Calu3 (cell line): ENCODE measurements at regions of chr17 and their contacts with region 1.

Region 1: DNA sequence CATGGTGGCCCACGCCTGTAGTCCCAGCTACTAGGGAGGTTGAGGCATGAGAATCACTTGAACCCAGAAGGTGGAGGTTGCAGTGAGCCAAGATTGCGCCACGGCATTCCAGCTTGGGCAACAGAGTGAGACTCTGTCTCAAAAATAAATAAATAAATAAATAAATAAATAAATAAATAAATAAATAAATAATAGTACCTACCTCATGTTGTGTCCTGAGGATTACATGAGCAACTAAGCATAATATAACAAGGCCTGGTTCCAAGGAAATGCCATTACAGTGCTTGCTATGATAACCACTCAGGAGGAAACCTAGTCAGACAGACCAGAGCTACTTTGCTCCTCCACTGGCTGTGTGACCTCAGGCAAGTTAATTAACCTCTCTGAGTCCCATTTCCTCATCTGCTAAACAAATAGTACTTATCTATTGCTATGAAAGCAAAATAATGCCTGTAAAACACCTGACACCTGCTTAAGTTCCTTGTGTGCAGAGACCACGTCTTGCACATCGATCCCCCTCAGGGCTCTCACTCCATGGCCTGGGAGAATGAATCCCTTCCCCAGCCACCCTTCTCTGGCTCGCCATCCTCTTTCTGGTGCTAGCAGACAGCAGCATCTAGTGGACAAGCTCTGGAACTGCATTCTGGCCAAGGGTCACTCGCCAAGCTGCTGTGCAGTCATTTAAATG is 7.5 kb downstream of the EPOP start:
- DNase-seq: peak; percentile 96
- H3K4me3 Mint-ChIP-seq: no peak overlapping the region
- H3K27ac Mint-ChIP-seq: no peak overlapping the region
- H3K4me1 Mint-ChIP-seq: peaks cover 15% of the 10 kb centered on the region
- H3K27me3 Mint-ChIP-seq: peaks cover 69% of the 10 kb centered on the region
- CTCF ChIP-seq: peak; percentile 100

Region 2: GRCh38 chr17:38444151-38444550 is 223.1 kb before region 1 on chr17:
- CTCF ChIA-PET with region 1: interaction called, 3 read pairs
- intact Hi-C with region 1: loop called (anchors 5 kb)
- DNase-seq: peak; percentile 96
- H3K4me3 Mint-ChIP-seq: peak overlapping the region; percentile 1
- H3K27ac Mint-ChIP-seq: no peak overlapping the region
- H3K4me1 Mint-ChIP-seq: peaks cover 36% of the 10 kb centered on the region
- H3K27me3 Mint-ChIP-seq: peaks cover 30% of the 10 kb centered on the region
- CTCF ChIP-seq: peak; percentile 100

Region 3: GRCh38 chr17:38572669-38573365 is 94.4 kb before region 1 on chr17:
- CTCF ChIA-PET with region 1: interaction called, 12 read pairs
- intact Hi-C with region 1: no loop called
- DNase-seq: peak; percentile 75
- H3K4me3 Mint-ChIP-seq: peak overlapping the region; percentile 24
- H3K27ac Mint-ChIP-seq: no peak overlapping the region
- H3K4me1 Mint-ChIP-seq: peaks cover 10% of the 10 kb centered on the region
- H3K27me3 Mint-ChIP-seq: peaks cover 100% of the 10 kb centered on the region
- CTCF ChIP-seq: no peak

Region 4: DNA sequence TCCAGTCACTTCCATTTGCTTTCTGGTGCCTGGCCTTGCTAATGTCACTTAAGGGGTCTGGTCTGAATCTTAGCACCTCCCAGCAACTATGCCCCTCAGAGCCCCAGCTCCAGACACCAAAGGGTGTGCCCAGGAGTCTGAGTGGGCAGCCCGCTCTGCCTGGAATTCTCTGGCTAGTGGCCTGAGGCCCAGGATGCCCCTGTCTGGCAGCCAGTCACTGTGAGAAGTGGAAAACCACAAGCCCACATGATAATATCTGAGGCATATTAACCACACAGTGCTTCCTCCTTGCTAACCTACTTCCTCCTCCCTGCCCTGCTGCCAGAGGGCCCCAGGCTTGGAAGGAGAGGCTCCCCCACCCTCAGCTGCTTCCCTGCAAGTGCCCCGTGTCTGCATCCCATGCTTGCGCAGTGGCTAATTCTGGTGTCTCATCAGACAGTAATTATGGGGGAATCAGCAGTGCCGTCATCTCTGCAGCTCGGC is 75.4 kb before region 1 on chr17:
- CTCF ChIA-PET with region 1: interaction called, 17 read pairs
- intact Hi-C with region 1: no loop called
- DNase-seq: peak; percentile 71
- H3K4me3 Mint-ChIP-seq: no peak overlapping the region
- H3K27ac Mint-ChIP-seq: no peak overlapping the region
- H3K4me1 Mint-ChIP-seq: peaks cover 24% of the 10 kb centered on the region
- H3K27me3 Mint-ChIP-seq: peaks cover 80% of the 10 kb centered on the region
- CTCF ChIP-seq: no peak

Region 5: DNA sequence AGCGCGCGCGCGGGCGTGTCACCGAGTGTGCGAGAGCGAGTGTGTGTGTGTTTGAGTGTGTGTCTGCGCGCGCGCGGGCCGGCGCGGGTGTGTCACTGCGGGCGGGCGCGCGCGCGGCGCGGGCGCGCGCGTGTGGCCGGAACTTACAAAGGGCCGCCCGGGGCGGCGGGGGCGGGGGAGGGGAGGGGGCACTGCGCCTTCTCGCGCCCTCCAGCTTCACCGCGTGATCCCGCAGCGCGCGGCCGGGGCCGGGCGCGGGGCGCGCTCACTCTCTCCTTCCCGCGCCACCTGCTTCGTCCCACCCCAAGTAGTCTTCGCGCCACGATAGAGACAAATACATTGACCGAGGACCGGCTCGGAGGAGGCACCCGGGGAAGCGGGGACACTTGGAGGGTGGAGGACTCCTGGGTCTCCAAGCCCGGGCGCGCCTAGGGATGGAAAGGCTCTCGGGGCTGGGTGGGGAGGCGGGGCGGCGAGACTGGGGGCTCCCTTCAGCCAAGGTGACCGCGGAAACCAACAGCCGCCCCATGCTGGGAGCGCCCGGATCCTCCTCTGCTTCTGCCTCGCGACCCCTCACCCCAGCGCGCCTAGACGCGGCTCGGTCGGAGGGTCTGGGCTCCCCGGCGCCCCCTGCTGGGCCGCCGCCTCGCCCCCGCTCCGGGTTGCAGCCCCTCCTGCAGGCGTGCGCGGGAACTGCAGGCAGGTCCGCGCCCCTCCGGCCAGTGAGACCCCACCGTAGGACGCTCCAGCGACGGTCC is 61.2 kb before region 1 on chr17 and contains the start of gene SRCIN1:
- CTCF ChIA-PET with region 1: interaction called, 68 read pairs
- intact Hi-C with region 1: loop called (anchors 2 kb)
- DNase-seq: peak; percentile 91
- H3K4me3 Mint-ChIP-seq: peak within 1 kb of the TSS; percentile 74
- H3K27ac Mint-ChIP-seq: peak within 1 kb of the TSS; percentile 48
- H3K4me1 Mint-ChIP-seq: peaks cover 31% of the 10 kb centered on the region
- H3K27me3 Mint-ChIP-seq: peaks cover 99% of the 10 kb centered on the region
- CTCF ChIP-seq: peak; percentile 100
- total RNA-seq, gene SRCIN1: 46.6 and 46.7 TPM in 2 replicates

Region 6: DNA sequence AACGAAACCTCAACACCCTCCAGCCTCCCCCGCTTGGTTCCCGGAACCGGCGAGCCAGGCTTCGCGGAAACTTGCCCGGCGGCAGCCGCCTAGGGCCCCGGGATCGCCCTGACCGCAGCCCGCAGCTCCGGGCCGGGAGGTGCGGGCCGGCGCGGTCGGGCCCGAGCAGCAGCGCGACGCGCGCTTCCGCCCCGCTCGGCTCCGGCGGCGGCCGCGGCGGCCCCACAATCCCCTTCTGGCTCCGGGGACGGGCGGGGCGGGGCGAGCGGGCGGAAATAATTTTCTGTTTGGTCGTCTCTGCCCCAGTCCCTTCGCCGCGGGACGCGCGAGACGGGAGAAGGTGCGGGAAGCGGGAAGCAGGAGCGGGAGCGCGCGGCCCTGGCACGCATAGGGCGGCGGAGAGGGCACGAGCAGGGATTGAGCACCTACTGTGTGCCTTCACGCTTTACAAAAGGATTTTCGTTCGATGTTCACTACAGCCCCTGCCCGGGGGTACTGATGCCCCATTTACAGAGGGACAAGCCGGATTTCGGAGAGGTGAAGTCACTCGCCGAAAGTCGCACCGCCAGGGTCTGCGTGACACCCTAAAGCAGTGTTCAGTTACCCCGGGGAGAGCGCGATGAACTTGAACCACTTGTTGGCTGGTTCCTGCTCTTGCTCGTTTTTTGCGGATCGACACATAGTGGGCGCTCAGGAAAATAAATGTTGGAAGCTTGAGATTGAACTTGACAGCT is 35.1 kb after region 1 on chr17:
- CTCF ChIA-PET with region 1: interaction called, 12 read pairs
- intact Hi-C with region 1: no loop called
- DNase-seq: peak; percentile 99
- H3K4me3 Mint-ChIP-seq: peak overlapping the region; percentile 85
- H3K27ac Mint-ChIP-seq: peak overlapping the region; percentile 90
- H3K4me1 Mint-ChIP-seq: peaks cover 37% of the 10 kb centered on the region
- H3K27me3 Mint-ChIP-seq: peaks cover 33% of the 10 kb centered on the region
- CTCF ChIP-seq: no peak

Region 7: DNA sequence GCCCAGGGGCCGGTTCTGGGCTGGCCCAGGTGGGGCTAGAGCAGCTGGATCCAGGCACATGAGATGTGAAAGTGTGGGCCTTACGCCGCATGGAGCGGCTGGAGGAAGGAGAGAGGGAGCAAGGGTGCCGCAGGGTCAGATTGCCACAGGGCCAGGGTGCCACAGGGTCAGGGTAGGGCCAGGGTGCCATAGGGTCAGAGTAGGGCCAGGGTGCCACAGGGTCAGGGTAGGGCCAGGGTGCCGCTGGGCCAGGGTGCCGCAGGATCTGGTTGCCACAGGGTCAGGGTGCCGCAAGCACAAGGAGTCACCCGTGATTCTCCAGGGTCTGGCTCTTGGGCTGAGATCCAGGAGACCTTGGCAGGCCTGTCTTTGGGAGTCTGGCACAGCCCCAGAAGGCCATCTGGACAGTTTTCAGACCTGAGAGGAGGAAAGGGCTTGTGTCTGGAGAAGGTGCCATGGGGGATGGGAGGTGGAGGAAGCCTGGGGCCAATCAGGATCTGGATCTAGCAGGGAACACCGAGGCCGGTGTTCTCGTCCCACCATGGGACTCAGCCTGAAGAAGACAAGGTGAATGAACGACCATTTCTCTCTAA is 245.1 kb after region 1 on chr17:
- CTCF ChIA-PET with region 1: no interaction called
- intact Hi-C with region 1: no loop called
- DNase-seq: no peak
- H3K4me3 Mint-ChIP-seq: no peak overlapping the region
- H3K27ac Mint-ChIP-seq: no peak overlapping the region
- H3K4me1 Mint-ChIP-seq: peaks cover 8% of the 10 kb centered on the region
- H3K27me3 Mint-ChIP-seq: no peaks in the 10 kb centered on the region
- CTCF ChIP-seq: no peak

Region 8: GRCh38 chr17:38922538-38923297 is 255.5 kb after region 1 on chr17:
- CTCF ChIA-PET with region 1: no interaction called
- intact Hi-C with region 1: no loop called
- DNase-seq: peak; percentile 68
- H3K4me3 Mint-ChIP-seq: no peak overlapping the region
- H3K27ac Mint-ChIP-seq: no peak overlapping the region
- H3K4me1 Mint-ChIP-seq: no peaks in the 10 kb centered on the region
- H3K27me3 Mint-ChIP-seq: no peaks in the 10 kb centered on the region
- CTCF ChIP-seq: no peak